ENCODE measurements at regions of chr16 and their contacts with region 1.

Region 1: DNA sequence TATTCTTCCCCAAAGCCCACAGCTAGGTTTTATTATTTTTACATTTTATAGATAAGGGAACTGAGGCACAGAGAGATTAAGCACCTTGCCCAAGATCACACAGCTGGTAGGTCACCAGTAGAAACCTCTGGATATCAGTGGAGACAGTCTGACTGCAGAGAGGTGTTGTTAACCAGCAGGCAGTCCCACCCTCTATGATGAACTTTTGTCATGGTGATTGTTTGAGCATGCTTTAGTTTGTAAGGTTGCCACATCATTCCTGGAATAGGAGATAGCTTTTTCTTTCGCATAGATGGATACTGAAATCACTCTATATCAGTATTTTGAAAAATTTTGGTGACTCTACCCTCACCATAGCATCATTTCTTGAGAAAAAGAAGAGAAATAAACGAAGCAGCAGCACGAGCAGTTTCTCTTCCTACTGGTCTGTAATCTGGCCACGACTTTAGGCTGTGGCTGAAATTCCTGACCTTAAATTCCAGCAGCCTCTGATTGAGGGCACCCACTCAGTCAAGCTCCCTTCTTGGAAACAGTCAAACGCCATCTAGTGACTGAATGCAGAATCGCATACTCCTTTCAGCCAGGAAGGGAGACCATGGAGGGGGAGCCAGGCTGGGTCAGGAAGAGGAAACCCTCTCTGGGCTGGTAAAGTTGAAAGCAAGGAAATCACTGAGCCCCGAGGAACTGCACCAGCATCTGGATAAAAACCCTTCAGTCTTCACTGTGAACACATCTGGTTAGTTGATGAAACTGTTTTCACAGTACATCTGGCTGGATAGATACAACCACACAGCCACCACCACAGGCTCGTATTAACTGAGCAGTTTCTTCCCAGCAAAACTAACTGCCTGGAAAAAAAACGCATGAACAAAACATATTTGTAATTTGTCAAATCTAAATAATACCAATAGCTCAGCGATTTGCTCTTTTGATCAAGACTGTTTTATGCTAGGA is 108.4 kb upstream of the XYLT1 start:
- DNase-seq: peak; percentile 66 to 68
- H3K4me3 ChIP-seq: no peak overlapping the region
- H3K27ac ChIP-seq: no peak overlapping the region
- H3K4me1 ChIP-seq: peaks cover 0 to 4% (median 0%) of the 10 kb centered on the region in 4 donors
- H3K27me3 ChIP-seq: peaks cover 0 to 2% of the 10 kb centered on the region in 2 donors
- CTCF ChIP-seq: peak; percentile 79 to 84

Region 2: GRCh38 chr16:17439580-17439979 is 139.6 kb before region 1 on chr16:
- intact Hi-C with region 1: no loop called
- DNase-seq: no peak
- H3K4me3 ChIP-seq: no peak overlapping the region
- H3K27ac ChIP-seq: no peak overlapping the region
- H3K4me1 ChIP-seq: peaks cover 0 to 9% (median 4%) of the 10 kb centered on the region in 4 donors
- H3K27me3 ChIP-seq: no peaks in the 10 kb centered on the region
- CTCF ChIP-seq: no peak

Region 3: GRCh38 chr16:17476414-17477270 is 102.6 kb before region 1 on chr16:
- intact Hi-C with region 1: loop called (anchors 5 kb)
- DNase-seq: no peak
- H3K4me3 ChIP-seq: no peak overlapping the region
- H3K27ac ChIP-seq: no peak overlapping the region
- H3K4me1 ChIP-seq: peaks cover 0 to 9% (median 6%) of the 10 kb centered on the region in 4 donors
- H3K27me3 ChIP-seq: peaks cover 0 to 18% of the 10 kb centered on the region in 2 donors
- CTCF ChIP-seq: peak; percentile 49 to 53